H1 (cell line): ENCODE measurements at regions of chr16 and their contacts with region 1.

Region 1: GRCh38 chr16:12095275-12096156 is 119.0 kb downstream of the SNX29 start:
- DNase-seq: peak; percentile 17 to 81
- H3K4me3 ChIP-seq: no peak overlapping the region
- H3K27ac ChIP-seq: no peak overlapping the region
- H3K4me1 ChIP-seq: peaks cover 0 to 12% (median 4%) of the 10 kb centered on the region in 4 experiments; a peak in 6 of 7 replicates
- H3K27me3 ChIP-seq: peaks cover 0 to 8% (median 3%) of the 10 kb centered on the region in 4 experiments; a peak in 5 of 7 replicates
- CTCF ChIP-seq: peak; percentile 69 to 89 (median 69)
- EP300 ChIP-seq: no peak
- POLR2A ChIP-seq: no peak
- RAD21 ChIP-seq: peak; percentile 89 to 94

Region 2: DNA sequence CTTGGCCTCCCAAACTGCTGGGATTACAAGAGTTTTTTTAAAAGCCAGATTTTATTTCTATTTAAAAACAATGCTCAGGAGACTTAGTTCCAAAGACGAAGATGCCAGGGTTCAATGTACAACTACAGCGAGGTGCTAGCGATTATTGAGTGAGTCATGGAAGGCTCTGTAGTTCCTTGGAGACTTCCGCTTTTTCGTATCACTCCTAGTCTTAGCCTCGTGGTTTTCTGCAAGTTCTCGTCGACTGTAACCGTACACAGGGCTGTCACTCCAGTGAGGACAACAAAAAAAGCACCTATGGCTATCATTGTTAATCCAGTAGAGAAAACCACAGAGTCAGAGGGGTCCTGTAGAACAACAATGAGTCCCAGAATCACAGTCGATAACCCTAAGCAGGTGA is 275.7 kb before region 1 on chr16:
- CTCF ChIA-PET with region 1: no interaction called
- POLR2A ChIA-PET with region 1: no interaction called
- DNase-seq: no peak
- H3K4me3 ChIP-seq: no peak overlapping the region
- H3K27ac ChIP-seq: no peak overlapping the region
- H3K4me1 ChIP-seq: no peaks in the 10 kb centered on the region
- H3K27me3 ChIP-seq: no peaks in the 10 kb centered on the region
- CTCF ChIP-seq: no peak
- EP300 ChIP-seq: no peak
- POLR2A ChIP-seq: no peak
- RAD21 ChIP-seq: no peak

Region 3: GRCh38 chr16:11990702-11991390 is 104.7 kb before region 1 on chr16:
- CTCF ChIA-PET with region 1: no interaction called
- POLR2A ChIA-PET with region 1: no interaction called
- DNase-seq: no peak
- H3K4me3 ChIP-seq: no peak overlapping the region
- H3K27ac ChIP-seq: no peak overlapping the region
- H3K4me1 ChIP-seq: peaks cover 0 to 6% (median 1%) of the 10 kb centered on the region in 4 experiments; a peak in 2 of 7 replicates
- H3K27me3 ChIP-seq: no peaks in the 10 kb centered on the region
- CTCF ChIP-seq: no peak
- EP300 ChIP-seq: no peak
- POLR2A ChIP-seq: no peak
- RAD21 ChIP-seq: no peak

Region 4: GRCh38 chr16:12133729-12134128 is 38.2 kb after region 1 on chr16:
- CTCF ChIA-PET with region 1: interaction called, 15 read pairs
- POLR2A ChIA-PET with region 1: no interaction called
- DNase-seq: no peak
- H3K4me3 ChIP-seq: no peak overlapping the region
- H3K27ac ChIP-seq: no peak overlapping the region
- H3K4me1 ChIP-seq: no peaks in the 10 kb centered on the region
- H3K27me3 ChIP-seq: no peaks in the 10 kb centered on the region; a peak in 2 of 7 replicates
- CTCF ChIP-seq: no peak
- EP300 ChIP-seq: no peak
- POLR2A ChIP-seq: no peak
- RAD21 ChIP-seq: no peak

Region 5: GRCh38 chr16:12163970-12164369 is 68.5 kb after region 1 on chr16:
- CTCF ChIA-PET with region 1: interaction called, 41 read pairs
- POLR2A ChIA-PET with region 1: no interaction called
- DNase-seq: no peak
- H3K4me3 ChIP-seq: no peak overlapping the region
- H3K27ac ChIP-seq: no peak overlapping the region
- H3K4me1 ChIP-seq: no peaks in the 10 kb centered on the region; a peak in 1 of 7 replicates
- H3K27me3 ChIP-seq: no peaks in the 10 kb centered on the region
- CTCF ChIP-seq: no peak
- EP300 ChIP-seq: no peak
- POLR2A ChIP-seq: no peak
- RAD21 ChIP-seq: no peak

Region 6: GRCh38 chr16:12188061-12188934 is 92.8 kb after region 1 on chr16:
- CTCF ChIA-PET with region 1: interaction called, 19 read pairs
- POLR2A ChIA-PET with region 1: no interaction called
- DNase-seq: no peak
- H3K4me3 ChIP-seq: no peak overlapping the region
- H3K27ac ChIP-seq: no peak overlapping the region
- H3K4me1 ChIP-seq: peaks cover 0 to 12% (median 3%) of the 10 kb centered on the region in 4 experiments; a peak in 2 of 7 replicates
- H3K27me3 ChIP-seq: no peaks in the 10 kb centered on the region
- CTCF ChIP-seq: no peak
- EP300 ChIP-seq: no peak
- POLR2A ChIP-seq: no peak
- RAD21 ChIP-seq: no peak

Region 7: GRCh38 chr16:12220766-12221165 is 125.2 kb after region 1 on chr16:
- CTCF ChIA-PET with region 1: interaction called, 71 read pairs
- POLR2A ChIA-PET with region 1: no interaction called
- DNase-seq: no peak
- H3K4me3 ChIP-seq: no peak overlapping the region
- H3K27ac ChIP-seq: no peak overlapping the region
- H3K4me1 ChIP-seq: peaks cover 0 to 1% (median 0%) of the 10 kb centered on the region in 4 experiments; a peak in 1 of 7 replicates
- H3K27me3 ChIP-seq: no peaks in the 10 kb centered on the region
- CTCF ChIP-seq: no peak
- EP300 ChIP-seq: no peak
- POLR2A ChIP-seq: no peak
- RAD21 ChIP-seq: no peak

Region 8: DNA sequence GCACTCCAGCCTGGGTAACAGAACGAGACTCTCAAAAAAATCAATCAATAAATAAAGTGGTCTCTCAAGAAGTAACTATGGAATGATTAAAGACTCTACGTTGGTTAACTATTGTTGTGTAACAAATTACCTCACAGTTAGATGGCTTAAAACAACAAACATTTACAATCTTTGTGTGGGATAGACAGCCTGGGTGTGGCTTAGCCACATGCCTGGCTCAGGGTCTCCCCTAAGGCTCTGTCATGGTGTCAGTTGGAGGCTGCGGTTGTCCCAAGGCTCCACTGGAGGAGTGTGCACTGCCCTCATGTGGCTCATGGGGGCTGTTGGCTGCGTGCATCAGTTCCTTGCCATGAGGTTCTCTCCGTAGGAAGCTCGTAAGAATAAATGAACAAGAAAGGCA is 175.5 kb after region 1 on chr16:
- CTCF ChIA-PET with region 1: interaction called, 30 read pairs
- POLR2A ChIA-PET with region 1: no interaction called
- DNase-seq: peak; percentile 31 to 54
- H3K4me3 ChIP-seq: no peak overlapping the region
- H3K27ac ChIP-seq: no peak overlapping the region
- H3K4me1 ChIP-seq: no peaks in the 10 kb centered on the region
- H3K27me3 ChIP-seq: no peaks in the 10 kb centered on the region
- CTCF ChIP-seq: peak; percentile 72 to 81 (median 78)
- EP300 ChIP-seq: no peak
- POLR2A ChIP-seq: no peak
- RAD21 ChIP-seq: peak; percentile 72 to 84